ENCODE measurements at regions of chr14 and their contacts with region 1.

Region 1: DNA sequence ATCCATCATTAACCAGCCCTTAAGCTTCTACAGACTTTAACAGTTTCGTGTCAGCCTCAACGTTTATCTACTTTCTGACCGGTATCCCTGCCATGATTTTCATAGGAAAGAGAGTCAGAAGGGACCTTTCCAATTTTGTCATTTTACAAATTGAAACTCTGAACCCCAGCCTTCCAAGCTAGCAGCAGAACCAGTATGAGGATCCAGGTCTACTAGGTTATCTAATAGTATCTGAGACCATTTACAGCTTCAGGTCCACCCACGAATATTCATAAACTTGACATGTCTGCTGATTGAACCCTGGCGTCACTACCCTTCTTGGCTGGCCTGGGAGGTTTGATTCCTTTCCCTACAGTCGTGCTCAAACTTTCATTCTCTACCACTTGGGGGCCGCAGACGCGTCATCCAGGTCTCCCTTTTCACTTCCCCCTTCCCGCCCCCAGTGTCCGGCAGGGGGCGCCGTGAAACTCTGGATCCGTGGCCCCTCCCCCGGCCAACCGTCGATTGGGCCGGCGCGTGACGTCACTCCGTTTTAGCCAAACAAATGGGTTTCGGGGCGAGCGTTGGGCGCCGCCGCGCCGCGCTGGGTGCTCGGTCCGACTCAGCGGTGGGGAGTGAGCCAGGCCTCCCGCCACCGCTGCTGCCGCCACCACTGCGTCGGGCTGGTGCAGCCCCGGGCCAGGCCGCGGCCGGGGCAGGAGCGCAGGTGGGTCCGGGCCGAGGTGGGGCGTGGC is at the start of gene FBXO34:
- DNase-seq: peak; percentile 99
- ATAC-seq: peak; percentile 90
- H3K4me3 Mint-ChIP-seq: peak within 1 kb of the TSS; percentile 90
- H3K27ac Mint-ChIP-seq: peak within 1 kb of the TSS; percentile 97
- H3K4me1 Mint-ChIP-seq: peaks cover 36% of the 10 kb centered on the region
- H3K27me3 Mint-ChIP-seq: no peaks in the 10 kb centered on the region
- total RNA-seq, gene FBXO34: 17.4 to 18.3 TPM

Region 2: DNA sequence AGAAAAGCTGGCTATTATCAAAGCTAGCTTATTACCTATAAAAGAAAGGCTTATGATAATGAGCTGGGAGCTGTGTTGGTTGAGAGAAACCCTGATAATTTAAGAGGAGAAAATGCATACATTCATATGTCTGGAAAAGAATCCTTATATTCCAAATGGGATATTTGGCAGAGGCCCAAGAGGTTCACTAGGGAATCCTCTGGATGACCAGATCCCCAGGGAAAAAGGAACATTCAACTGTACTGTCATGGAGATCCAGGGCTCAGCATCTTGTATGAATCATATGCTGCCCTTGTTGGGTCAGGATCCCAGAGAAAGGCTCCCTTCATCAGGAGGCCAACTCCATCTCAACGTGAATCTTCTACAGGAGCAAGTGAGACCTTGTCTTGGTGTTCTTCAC is 16.4 kb before region 1 on chr14:
- CTCF ChIA-PET with region 1: interaction called, 12 read pairs
- POLR2A ChIA-PET with region 1: no interaction called
- DNase-seq: no peak
- ATAC-seq: no peak
- H3K4me3 Mint-ChIP-seq: no peak overlapping the region
- H3K27ac Mint-ChIP-seq: no peak overlapping the region
- H3K4me1 Mint-ChIP-seq: no peaks in the 10 kb centered on the region
- H3K27me3 Mint-ChIP-seq: peaks cover 22% of the 10 kb centered on the region

Region 3: GRCh38 chr14:55285048-55285652 is 14.2 kb after region 1 on chr14:
- CTCF ChIA-PET with region 1: interaction called, 17 read pairs
- POLR2A ChIA-PET with region 1: no interaction called
- DNase-seq: no peak
- ATAC-seq: no peak
- H3K4me3 Mint-ChIP-seq: no peak overlapping the region
- H3K27ac Mint-ChIP-seq: no peak overlapping the region
- H3K4me1 Mint-ChIP-seq: peaks cover 10% of the 10 kb centered on the region
- H3K27me3 Mint-ChIP-seq: no peaks in the 10 kb centered on the region

Region 4: DNA sequence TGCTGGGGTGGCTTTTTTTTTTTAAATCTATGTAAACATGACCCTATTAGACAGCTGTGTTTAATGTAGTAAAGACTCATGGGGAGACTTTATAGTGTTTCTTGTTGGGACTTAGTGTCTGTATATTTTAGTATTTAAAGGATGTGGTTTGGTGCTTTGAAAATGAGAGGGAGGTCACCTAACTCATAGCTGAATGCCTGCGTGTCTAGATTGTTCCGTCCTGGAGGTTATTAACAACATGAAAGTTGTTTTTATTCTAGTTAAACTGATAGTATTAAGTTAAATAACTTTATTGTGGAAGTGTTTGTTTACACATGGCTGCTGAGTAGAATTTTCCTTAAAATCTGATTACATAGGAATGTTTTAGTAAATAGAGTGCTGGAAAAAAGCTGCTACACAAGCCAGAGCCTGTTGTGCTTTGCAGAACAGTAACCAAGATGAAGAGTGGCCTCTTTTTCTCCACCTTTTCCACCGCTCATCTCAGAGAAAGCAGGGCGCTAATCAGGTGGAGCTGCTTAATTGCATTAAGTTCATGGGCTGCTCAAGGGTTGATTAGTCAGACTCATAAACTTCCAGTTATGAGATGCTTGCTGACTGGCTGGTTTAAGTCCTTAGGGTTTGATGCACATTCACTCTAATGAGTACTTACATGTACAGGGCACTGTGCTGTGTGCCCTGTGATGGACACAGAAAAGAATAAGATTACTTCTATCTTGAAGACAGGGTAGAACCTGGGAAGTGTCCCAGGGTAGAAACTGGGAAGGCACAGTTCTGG is 62.9 kb after region 1 on chr14:
- CTCF ChIA-PET with region 1: interaction called, 36 read pairs
- POLR2A ChIA-PET with region 1: interaction called, 4 read pairs
- DNase-seq: no peak
- ATAC-seq: peak; percentile 37
- H3K4me3 Mint-ChIP-seq: peak overlapping the region; percentile 64
- H3K27ac Mint-ChIP-seq: peak overlapping the region; percentile 83
- H3K4me1 Mint-ChIP-seq: peaks cover 66% of the 10 kb centered on the region
- H3K27me3 Mint-ChIP-seq: no peaks in the 10 kb centered on the region

Region 5: GRCh38 chr14:55348766-55349453 is 77.9 kb after region 1 on chr14:
- CTCF ChIA-PET with region 1: interaction called, 121 read pairs
- POLR2A ChIA-PET with region 1: interaction called, 3 read pairs
- DNase-seq: no peak
- ATAC-seq: no peak
- H3K4me3 Mint-ChIP-seq: no peak overlapping the region
- H3K27ac Mint-ChIP-seq: no peak overlapping the region
- H3K4me1 Mint-ChIP-seq: peaks cover 22% of the 10 kb centered on the region
- H3K27me3 Mint-ChIP-seq: no peaks in the 10 kb centered on the region

Region 6: GRCh38 chr14:55361190-55361589 is 90.2 kb after region 1 on chr14:
- CTCF ChIA-PET with region 1: interaction called, 121 read pairs
- POLR2A ChIA-PET with region 1: no interaction called
- DNase-seq: no peak
- ATAC-seq: no peak
- H3K4me3 Mint-ChIP-seq: no peak overlapping the region
- H3K27ac Mint-ChIP-seq: no peak overlapping the region
- H3K4me1 Mint-ChIP-seq: peaks cover 5% of the 10 kb centered on the region
- H3K27me3 Mint-ChIP-seq: no peaks in the 10 kb centered on the region

Region 7: DNA sequence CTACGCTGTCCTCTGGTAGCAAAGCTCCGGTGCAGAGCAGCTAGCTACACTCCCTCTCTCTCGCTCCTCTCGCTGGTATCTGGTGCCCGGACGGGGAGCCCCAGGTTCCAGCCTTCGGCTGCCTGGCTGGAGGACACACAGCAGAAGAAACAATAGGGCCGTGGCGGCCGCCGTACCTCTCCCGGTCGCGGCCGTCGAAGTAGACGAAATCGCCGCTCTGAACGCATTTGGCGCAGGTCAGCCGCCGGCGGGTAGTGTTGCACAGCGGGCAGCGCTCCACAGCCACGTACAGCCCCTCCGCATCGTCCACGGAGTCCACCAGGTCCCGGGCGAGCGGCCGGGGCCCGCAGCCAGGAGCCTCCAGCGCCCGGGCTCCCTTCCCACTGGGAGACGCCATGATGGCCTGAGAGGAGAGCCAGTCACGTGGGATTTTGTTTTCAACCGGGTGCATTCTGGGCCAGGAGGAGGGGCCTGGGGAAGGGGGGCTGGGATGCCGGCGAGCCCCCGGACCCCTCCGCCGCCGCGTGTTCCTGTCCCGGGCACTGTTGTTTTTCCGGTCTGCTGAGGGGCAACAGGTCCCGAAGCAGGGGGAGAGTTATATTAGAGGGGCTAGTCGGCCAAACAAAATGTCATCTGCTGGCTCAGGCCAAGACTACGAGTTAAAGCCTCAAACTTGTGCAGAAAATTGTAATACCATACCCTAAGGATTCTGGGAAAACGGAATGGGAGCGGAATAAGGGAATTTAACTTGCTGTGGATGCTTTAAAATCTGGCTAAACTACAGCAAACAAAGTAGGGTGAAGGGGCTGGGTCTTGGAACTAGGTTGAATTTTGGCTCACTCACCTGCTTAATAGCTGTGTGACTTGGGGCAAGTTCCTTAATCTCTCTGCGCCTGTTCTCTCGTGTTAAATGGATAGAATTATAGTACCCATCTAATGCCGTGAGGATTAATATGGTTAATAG is 140.7 kb after region 1 on chr14 and contains the start of gene ATG14:
- CTCF ChIA-PET with region 1: interaction called, 11 read pairs
- POLR2A ChIA-PET with region 1: interaction called, 3 read pairs
- DNase-seq: peak; percentile 86
- ATAC-seq: peak; percentile 98
- H3K4me3 Mint-ChIP-seq: peak within 1 kb of the TSS; percentile 88
- H3K27ac Mint-ChIP-seq: peak within 1 kb of the TSS; percentile 71
- H3K4me1 Mint-ChIP-seq: peaks cover 29% of the 10 kb centered on the region
- H3K27me3 Mint-ChIP-seq: peaks cover 5% of the 10 kb centered on the region
- total RNA-seq, gene ATG14: 4.4 to 4.6 TPM

Measured in activated CD8-positive, alpha-beta T cell treated with anti-CD3 and anti-CD28 coated beads, Interleukin-2, amount 10 ng/mL, durations not matched to agents 7 days and 5 days (primary cell).